Endothelial cell of umbilical vein (primary cell): ENCODE measurements at regions of chr12 and their contacts with region 1.

Region 1: GRCh38 chr12:117587631-117588287 is 226.3 kb upstream of the NOS1 start:
- DNase-seq: peak; percentile 57
- H3K4me3 ChIP-seq: peak overlapping the region in 1 of 3 experiments; percentile 9
- H3K27ac ChIP-seq: no peak overlapping the region
- H3K4me1 ChIP-seq: no peaks in the 10 kb centered on the region
- H3K27me3 ChIP-seq: no peaks in the 10 kb centered on the region
- CTCF ChIP-seq: peak; percentile 83 to 96
- POLR2A ChIP-seq: no peak

Region 2: DNA sequence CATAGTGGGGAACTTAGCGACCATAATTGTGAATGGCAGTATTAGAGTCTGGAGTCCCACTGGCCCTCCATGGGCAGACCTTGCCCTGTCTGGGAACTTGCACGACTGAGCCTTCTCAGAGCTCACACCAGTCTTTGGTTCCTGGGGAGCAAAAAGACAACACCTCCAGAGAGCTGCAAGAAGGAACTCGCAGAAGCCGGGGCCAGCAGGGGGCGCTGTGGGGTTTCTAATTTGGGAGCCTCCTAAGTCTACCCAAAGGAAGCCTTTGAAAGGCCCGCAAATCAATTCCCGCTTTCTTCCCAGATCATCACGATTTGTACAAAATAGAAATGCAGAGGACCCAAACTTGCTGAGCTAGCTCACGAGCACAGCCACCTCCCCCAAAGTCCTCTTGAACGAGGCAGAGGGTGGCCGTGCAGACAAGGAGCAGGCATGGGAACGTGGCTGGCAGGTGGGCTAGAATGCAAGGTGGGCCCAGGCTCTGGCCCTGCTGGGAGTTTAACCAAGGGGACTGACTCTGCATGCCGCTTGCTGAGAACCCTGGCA is 351.2 kb before region 1 on chr12:
- CTCF ChIA-PET with region 1: interaction called, 13 read pairs
- POLR2A ChIA-PET with region 1: no interaction called
- dilution Hi-C with region 1: no loop called
- intact Hi-C with region 1: loop called (anchors 1 kb)
- DNase-seq: peak; percentile 45
- H3K4me3 ChIP-seq: no peak overlapping the region
- H3K27ac ChIP-seq: no peak overlapping the region
- H3K4me1 ChIP-seq: no peaks in the 10 kb centered on the region
- H3K27me3 ChIP-seq: no peaks in the 10 kb centered on the region
- CTCF ChIP-seq: peak; percentile 78 to 91
- POLR2A ChIP-seq: no peak

Region 3: DNA sequence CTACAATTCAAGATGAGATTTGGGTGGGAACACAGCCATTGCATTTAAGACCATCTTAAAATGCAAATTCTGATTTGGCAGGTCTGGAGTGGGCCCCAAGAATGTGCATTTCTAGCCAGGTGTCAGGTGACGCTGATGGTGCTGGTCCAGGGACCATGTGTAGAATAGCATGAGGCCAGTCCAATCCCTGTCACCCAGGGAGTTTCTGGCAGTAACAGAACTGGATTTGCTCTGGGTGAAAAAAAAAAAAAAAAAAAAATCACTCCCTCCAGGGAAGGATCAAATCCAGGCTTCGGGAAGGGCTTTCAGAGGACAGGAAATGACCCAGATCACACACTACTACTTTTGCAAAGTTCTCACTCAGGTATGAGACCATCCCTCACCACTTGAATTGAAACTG is 13.1 kb before region 1 on chr12:
- CTCF ChIA-PET with region 1: interaction called, 26 read pairs
- POLR2A ChIA-PET with region 1: no interaction called
- dilution Hi-C with region 1: no loop called
- intact Hi-C with region 1: no loop called
- DNase-seq: no peak
- H3K4me3 ChIP-seq: no peak overlapping the region
- H3K27ac ChIP-seq: no peak overlapping the region
- H3K4me1 ChIP-seq: no peaks in the 10 kb centered on the region
- H3K27me3 ChIP-seq: no peaks in the 10 kb centered on the region
- CTCF ChIP-seq: no peak
- POLR2A ChIP-seq: no peak

Region 4: GRCh38 chr12:117603316-117604113 is 15.8 kb after region 1 on chr12:
- CTCF ChIA-PET with region 1: interaction called, 19 read pairs
- POLR2A ChIA-PET with region 1: no interaction called
- dilution Hi-C with region 1: no loop called
- intact Hi-C with region 1: no loop called
- DNase-seq: peak; percentile 29
- H3K4me3 ChIP-seq: no peak overlapping the region
- H3K27ac ChIP-seq: no peak overlapping the region
- H3K4me1 ChIP-seq: no peaks in the 10 kb centered on the region
- H3K27me3 ChIP-seq: no peaks in the 10 kb centered on the region
- CTCF ChIP-seq: peak in 1 of 2 donors; percentile 15
- POLR2A ChIP-seq: no peak

Region 5: DNA sequence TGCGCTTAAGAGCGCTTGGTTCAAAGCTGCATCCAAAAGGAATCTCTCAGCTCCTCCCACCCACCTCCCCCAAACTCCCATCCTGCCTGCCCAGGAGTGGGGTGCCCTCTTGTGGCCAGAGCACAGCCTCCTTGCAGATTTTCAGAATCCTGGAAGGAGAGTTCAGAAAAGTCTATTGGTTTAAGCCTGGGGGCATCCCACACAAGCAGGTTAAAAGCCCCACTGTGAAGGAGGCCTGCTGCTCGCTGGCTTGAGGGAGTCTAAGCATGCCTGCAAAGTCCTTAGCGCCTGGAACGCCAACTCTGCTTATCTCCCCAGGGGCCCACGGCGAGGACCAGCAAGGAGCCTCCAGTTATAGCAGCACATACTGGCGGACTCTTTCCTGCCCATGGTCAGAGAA is 84.0 kb after region 1 on chr12:
- CTCF ChIA-PET with region 1: interaction called, 5 read pairs
- POLR2A ChIA-PET with region 1: no interaction called
- dilution Hi-C with region 1: no loop called
- intact Hi-C with region 1: loop called (anchors 5 kb)
- DNase-seq: peak; percentile 44
- H3K4me3 ChIP-seq: no peak overlapping the region
- H3K27ac ChIP-seq: no peak overlapping the region
- H3K4me1 ChIP-seq: peaks cover 33% of the 10 kb centered on the region
- H3K27me3 ChIP-seq: no peaks in the 10 kb centered on the region
- CTCF ChIP-seq: peak; percentile 39 to 67
- POLR2A ChIP-seq: no peak

Region 6: DNA sequence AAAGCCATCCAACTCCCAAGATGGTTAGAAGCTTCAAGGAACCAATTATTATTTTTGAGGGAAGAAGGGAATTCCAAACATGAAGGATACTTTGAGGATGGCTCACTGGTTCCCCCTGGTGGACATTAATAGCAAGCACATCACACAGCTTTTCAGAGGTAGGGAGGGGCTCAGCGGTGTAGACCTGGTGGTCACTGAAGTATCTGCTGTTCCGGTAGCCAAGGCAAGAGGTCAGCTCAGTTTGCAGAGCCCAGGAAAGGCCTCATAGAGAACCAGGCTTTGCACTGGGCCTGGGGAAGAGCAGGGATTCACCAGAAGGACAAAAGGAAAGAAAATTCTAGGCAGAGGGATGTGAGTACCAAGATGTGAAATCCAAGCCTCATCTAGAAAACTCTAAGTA is 262.3 kb after region 1 on chr12:
- CTCF ChIA-PET with region 1: interaction called, 22 read pairs
- POLR2A ChIA-PET with region 1: no interaction called
- dilution Hi-C with region 1: no loop called
- intact Hi-C with region 1: loop called (anchors 5 kb)
- DNase-seq: peak; percentile 54
- H3K4me3 ChIP-seq: no peak overlapping the region
- H3K27ac ChIP-seq: no peak overlapping the region
- H3K4me1 ChIP-seq: no peaks in the 10 kb centered on the region
- H3K27me3 ChIP-seq: peaks cover 6% of the 10 kb centered on the region in 2 experiments
- CTCF ChIP-seq: peak; percentile 86 to 88
- POLR2A ChIP-seq: no peak